Posterior vena cava (tissue), 2 donors: ENCODE measurements at regions of chr5 and their contacts with region 1.

Region 1: GRCh38 chr5:63963080-63963735 is 963 bp upstream of the HTR1A start:
- DNase-seq: no peak

Region 2: DNA sequence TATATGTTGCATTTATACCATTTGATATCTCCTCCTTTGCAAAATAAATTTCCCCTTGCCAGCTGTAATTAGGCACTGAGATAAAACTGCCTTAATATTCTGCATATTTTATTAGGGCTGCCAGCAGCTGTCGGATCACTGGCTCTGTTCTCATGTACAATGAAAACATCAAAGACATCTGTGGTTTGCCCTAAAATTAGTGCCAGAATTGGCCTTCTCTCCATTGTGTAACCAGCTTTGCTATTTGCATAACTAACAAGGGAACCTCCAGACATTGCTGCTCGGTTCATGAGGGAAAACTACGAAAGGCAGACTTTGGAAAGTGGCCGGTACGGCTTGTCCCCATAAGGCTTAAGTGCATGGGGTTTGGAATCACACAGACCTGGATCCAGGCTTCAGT is 1702.7 kb before region 1 on chr5:
- intact Hi-C with region 1: loop called in 1 of 2 experiments (anchors 5 kb)
- DNase-seq: no peak

Region 3: GRCh38 chr5:63726496-63726895 is 236.7 kb before region 1 on chr5:
- intact Hi-C with region 1: no loop called
- DNase-seq: no peak

Region 4: GRCh38 chr5:64190562-64191306 is 227.5 kb after region 1 on chr5:
- intact Hi-C with region 1: no loop called
- DNase-seq: no peak